ENCODE measurements at regions of chr5 and their contacts with region 1.

Region 1: GRCh38 chr5:132820162-132820754 is 7.2 kb downstream of the SOWAHA start:
- DNase-seq: peak; percentile 89 to 93
- ATAC-seq: peak; percentile 85 to 95 (median 89)
- H3K4me3 ChIP-seq: no peak overlapping the region
- H3K27ac ChIP-seq: no peak overlapping the region
- H3K4me1 ChIP-seq: no peaks in the 10 kb centered on the region
- H3K27me3 ChIP-seq: peaks cover 0 to 15% (median 0%) of the 10 kb centered on the region in 3 donors
- CTCF ChIP-seq: peak; percentile 92

Region 2: DNA sequence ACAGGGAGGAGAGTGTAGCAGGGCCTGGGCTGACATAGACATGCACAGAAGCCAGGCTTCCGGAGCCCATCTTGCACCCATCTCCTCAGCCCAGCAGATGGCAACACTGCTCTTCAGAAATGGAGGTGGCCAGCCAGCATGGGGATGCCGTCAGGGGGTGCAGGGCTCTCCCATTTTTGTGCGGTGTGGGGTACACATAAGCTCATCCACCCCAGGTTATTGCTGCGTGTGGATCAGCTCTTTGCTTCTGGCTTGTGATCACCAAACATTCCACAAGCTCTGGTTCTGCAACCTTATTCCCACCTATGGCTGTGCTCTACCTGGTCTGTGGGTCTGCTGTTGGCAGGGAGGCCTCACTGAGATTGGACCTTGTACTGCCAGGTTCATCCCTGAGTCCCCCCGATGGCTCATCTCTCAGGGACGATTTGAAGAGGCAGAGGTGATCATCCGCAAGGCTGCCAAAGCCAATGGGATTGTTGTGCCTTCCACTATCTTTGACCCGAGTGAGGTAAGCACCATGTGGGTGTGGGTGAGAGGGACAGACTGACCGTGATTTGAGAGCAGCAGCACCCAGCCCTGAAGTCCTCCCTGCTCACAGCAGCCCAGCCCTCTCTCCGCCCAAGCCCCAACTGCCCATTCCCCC is 433.5 kb before region 1 on chr5:
- intact Hi-C with region 1: loop called in 1 of 2 experiments (anchors 5 kb)
- DNase-seq: peak; percentile 69 to 79
- ATAC-seq: peak; percentile 57 to 72 (median 68)
- H3K4me3 ChIP-seq: no peak overlapping the region
- H3K27ac ChIP-seq: peak overlapping the region; percentile 59
- H3K4me1 ChIP-seq: peaks cover 39% of the 10 kb centered on the region
- H3K27me3 ChIP-seq: no peaks in the 10 kb centered on the region
- CTCF ChIP-seq: peak; percentile 63

Region 3: DNA sequence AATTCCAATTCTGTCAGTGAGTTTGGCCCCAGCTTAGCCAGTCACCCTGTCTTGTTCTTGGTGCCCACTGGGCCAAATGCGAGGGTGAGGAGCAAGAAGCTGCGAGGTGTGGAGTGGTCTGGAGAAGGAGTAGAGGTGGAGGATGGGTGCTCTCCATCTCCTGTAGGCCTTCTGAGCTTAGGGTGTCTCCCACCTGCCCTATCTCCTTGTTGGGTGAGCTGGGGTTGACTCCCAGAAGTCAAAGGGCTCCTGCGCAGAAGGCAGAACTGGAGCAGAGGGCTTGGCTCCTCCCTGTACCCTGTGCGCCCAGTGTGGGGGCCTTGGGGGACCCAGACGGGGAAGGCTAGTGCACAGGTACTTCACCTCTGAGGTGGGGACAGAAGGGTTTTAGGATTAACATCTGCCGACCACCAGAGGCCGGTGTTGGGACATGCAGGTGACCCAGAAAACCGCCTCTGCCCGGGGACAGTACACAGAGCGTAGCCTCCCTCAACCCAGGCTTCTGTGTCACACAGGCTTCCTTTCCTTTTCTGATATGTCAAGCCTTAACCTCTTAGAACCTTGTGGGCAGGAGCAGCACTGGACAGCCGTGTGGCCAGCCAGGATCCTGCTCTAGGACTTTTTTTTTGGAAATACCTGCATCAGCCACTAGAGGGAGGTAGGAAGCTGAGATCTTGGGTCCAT is 293.8 kb before region 1 on chr5:
- intact Hi-C with region 1: loop called in 1 of 2 experiments (anchors 5 kb)
- DNase-seq: no peak
- ATAC-seq: peak; percentile 70 to 87 (median 80)
- H3K4me3 ChIP-seq: no peak overlapping the region
- H3K27ac ChIP-seq: no peak overlapping the region
- H3K4me1 ChIP-seq: no peaks in the 10 kb centered on the region
- H3K27me3 ChIP-seq: no peaks in the 10 kb centered on the region
- CTCF ChIP-seq: peak; percentile 78

Region 4: GRCh38 chr5:132655821-132656773 is 164.2 kb before region 1 on chr5:
- intact Hi-C with region 1: loop called in 1 of 2 experiments (anchors 5 kb)
- DNase-seq: no peak
- ATAC-seq: peak; percentile 31 to 55 (median 41)
- H3K4me3 ChIP-seq: peak overlapping the region; percentile 63
- H3K27ac ChIP-seq: no peak overlapping the region
- H3K4me1 ChIP-seq: peaks cover 4% of the 10 kb centered on the region
- H3K27me3 ChIP-seq: peaks cover 0 to 43% (median 9%) of the 10 kb centered on the region in 3 donors
- CTCF ChIP-seq: peak; percentile 14

Region 5: DNA sequence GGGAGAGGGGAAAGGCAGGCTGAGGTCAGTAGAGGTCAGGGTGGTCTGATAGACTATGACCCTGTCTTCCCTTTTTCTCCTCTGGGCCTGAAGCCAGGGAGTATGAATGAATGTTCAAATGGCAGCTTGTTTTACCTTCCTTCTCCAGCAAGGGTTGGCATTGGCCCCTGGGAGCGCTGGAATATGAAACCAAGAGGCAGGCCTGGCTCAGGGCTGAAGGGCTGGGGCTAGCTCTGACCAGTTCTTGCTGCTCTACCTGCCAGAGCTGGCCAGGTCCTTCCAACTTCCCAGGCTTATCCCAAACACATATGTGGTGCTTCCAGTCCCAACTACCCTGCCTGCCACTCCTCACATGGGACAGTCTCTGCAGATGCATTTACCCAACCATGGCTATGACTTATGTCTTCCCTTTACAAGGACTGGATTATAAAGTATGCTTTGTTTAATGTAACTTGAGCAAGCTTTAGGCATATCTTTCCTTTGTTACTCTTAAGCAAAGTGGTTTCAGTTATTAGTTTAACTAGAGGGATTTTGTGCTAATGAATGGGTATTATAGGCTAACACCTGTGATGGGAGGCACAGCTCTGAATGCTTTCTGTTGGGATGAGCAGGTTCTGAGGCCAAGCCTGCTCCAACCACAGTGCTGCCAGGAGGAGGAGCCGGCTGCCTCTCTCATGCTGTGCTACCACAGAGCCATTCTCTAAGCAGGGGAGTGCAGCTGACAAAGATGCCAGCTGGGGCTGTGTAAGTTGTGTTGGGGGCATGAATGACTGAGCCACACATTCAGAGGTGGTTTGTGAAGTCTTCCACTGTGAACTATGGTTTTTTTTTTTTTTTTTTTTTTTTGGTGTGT is 66.9 kb before region 1 on chr5:
- intact Hi-C with region 1: loop called in 1 of 2 experiments (anchors 5 kb)
- DNase-seq: no peak
- ATAC-seq: peak; percentile 42 to 59 (median 52)
- H3K4me3 ChIP-seq: no peak overlapping the region
- H3K27ac ChIP-seq: no peak overlapping the region
- H3K4me1 ChIP-seq: no peaks in the 10 kb centered on the region
- H3K27me3 ChIP-seq: peaks cover 0 to 5% (median under 1%) of the 10 kb centered on the region in 3 donors
- CTCF ChIP-seq: no peak

Measured in psoas muscle (tissue), 8 donors.